Gastrocnemius medialis (tissue), 4 donors: ENCODE measurements at regions of chr17 and their contacts with region 1.

Region 1: DNA sequence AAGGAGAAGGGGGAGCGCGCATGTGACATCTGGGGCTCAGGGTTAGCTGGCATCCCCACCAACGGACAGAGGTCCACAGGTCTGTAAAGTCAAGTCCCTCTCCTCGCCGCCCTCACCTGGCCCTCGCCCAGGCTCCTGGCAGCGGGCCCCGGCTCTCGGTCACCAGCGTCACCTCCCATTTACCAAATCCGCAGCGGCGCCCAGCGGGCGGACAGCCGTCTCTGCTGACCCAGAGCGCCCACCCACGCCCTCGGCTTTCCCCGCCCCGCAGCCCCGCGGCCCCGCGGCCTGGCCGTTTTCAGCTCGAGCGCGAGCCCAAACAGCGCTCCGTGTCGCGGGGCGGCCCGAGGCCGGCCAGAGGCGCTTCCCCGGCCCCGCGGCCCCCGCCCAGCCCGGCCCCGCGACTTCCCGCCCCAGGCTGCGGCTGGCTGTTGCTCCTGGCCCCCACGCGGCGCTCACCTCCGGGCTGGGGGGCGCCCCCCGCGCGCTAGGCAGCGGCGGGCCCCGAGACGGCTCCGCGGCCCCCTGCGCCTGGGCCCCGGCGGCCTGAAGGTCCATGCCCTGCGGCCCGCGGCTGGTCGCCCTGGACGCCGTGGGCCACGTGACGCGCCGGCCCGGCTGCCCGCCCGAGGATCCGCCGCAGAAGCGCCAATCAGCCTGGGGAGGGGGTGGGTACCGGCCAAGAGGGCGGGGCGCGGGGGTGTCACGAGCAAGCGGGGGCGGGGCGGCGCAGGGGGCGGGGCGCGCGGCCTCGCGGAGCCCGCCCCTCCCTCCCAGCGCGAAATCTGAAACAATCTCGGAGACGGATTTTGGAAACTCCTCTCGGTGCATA is at the start of gene COPRS:
- DNase-seq: peak; percentile 85 to 88
- ATAC-seq: peak; percentile 93 to 96
- H3K4me3 ChIP-seq: peak within 1 kb of the TSS; percentile 54 to 82 (median 73)
- H3K27ac ChIP-seq: peak within 1 kb of the TSS; percentile 69 to 83 (median 78)
- H3K4me1 ChIP-seq: peaks cover 7 to 12% of the 10 kb centered on the region in 2 donors
- H3K27me3 ChIP-seq: no peaks in the 10 kb centered on the region
- CTCF ChIP-seq: no peak
- POLR2A ChIP-seq: peak; percentile 58 to 70
- total RNA-seq, gene COPRS: 43.8 to 73.9 (median 61.6) TPM

Region 2: DNA sequence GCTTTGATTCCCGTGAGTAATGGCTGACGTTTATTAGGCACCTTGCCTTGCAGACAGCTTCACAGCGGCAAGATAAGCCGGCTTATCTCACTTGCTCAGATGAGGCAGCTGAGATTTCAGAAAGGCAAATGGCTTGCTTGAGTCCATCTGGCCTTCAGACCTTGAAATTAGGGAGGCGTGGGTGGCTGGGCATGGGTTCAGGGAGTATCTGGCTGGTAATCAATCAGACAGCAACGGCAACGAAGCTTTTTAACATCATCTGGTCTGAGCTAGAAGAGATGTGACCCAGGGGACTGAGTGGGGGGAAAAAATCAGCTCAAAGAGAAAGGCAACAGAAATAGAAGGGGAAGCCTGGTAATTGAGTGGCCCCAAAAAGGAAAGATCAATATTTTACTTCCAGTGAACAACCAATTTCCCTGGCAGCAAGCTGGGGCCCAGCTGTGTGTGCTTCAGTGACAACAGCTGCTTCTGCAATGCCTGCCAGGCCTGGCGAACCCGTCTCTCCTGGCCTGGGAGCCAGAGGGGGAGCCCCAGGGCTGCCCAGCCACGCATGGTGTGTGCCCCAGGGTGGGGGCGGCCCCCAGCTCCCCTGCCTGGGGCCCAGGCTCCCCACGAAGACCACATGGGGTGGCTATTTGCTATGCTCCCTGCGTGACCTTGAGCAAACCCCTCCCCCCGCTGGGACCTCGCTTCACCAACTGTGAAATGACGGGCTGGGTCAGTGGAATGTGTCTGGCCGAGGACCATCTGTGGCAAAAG is 433.4 kb before region 1 on chr17:
- in situ Hi-C with region 1: loop called in 1 of 4 experiments (anchors 25 kb)
- intact Hi-C with region 1: no loop called
- DNase-seq: no peak
- ATAC-seq: no peak
- H3K4me3 ChIP-seq: no peak overlapping the region
- H3K27ac ChIP-seq: no peak overlapping the region
- H3K4me1 ChIP-seq: no peaks in the 10 kb centered on the region
- H3K27me3 ChIP-seq: peaks cover 0 to 4% (median 0%) of the 10 kb centered on the region in 3 donors
- CTCF ChIP-seq: no peak
- POLR2A ChIP-seq: no peak

Region 3: DNA sequence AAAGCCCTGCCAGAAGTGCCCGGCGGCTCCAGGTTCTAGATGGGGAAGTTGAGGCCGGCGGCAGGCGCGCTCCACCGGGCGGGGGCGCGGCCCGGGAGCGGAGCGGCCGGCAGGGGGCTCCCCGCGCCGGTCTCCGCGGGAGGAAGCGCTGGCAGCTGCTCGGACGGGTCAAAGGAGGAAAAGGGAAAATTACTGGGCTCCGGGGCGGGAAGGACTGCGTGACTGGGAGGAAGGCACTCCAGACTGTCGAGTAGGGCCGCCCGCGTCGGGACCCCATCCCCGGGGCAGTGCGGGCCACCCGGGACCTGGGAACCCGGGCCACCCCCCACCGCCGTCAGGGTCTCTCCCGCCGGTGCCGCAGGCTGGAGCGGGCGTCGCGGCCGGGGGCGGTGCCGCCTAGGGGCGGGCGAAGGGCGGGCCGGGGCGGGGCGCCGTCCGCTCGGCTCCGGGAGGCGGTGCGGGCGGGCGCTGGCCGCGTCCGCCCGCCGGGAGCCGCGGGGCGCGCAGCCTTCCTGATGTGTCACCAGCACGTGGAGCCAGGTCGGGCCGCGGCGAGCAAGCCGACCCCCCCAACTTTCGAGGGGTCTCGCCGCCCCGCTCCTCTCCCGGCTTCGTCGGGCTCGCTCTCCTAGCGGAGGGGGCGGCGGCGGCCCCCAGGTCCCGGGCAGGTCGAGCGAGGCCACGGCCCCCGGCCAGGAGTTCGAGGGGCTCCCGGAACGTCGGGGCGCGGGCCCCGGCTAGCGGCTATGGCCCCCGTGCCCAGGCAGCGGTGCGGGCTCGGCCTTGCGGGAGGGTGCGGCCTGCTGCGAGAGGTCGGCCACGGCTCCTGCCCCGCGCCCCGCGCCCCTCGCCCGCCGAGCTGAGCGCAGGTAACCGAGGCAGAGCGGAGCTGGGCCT is 299.9 kb before region 1 on chr17:
- in situ Hi-C with region 1: no loop called
- intact Hi-C with region 1: loop called (anchors 5 kb)
- DNase-seq: peak; percentile 59 to 70
- ATAC-seq: peak; percentile 93
- H3K4me3 ChIP-seq: peak overlapping the region; percentile 56 to 76 (median 68)
- H3K27ac ChIP-seq: peak overlapping the region; percentile 55 to 86 (median 78)
- H3K4me1 ChIP-seq: peaks cover 0 to 6% of the 10 kb centered on the region in 2 donors
- H3K27me3 ChIP-seq: peaks cover 0 to 6% (median 0%) of the 10 kb centered on the region in 3 donors
- CTCF ChIP-seq: peak; percentile 72 to 99 (median 94)
- POLR2A ChIP-seq: peak; percentile 48 to 60

Region 4: GRCh38 chr17:31811101-31811500 is 47.8 kb before region 1 on chr17:
- in situ Hi-C with region 1: no loop called
- intact Hi-C with region 1: no loop called
- DNase-seq: no peak
- ATAC-seq: no peak
- H3K4me3 ChIP-seq: no peak overlapping the region
- H3K27ac ChIP-seq: no peak overlapping the region
- H3K4me1 ChIP-seq: no peaks in the 10 kb centered on the region
- H3K27me3 ChIP-seq: no peaks in the 10 kb centered on the region
- CTCF ChIP-seq: no peak
- POLR2A ChIP-seq: no peak

Region 5: DNA sequence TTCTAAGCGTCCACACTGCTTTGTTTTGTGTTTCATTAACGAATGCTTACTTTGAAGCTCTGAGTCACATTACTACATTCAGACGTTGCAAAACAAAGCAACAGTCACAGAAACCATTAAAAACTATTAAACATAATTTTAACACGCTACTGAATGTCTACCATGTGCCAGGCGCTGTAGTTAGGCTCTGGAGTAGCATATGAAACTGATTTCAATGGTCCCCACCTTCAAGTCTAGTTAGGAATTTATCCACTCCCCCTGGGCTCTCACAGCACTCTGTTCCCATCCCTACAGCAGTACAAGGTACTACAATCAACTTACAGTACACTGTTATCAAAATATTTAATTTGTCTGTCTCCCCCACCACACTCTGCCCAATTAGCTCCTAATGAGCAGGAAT is 42.0 kb after region 1 on chr17:
- in situ Hi-C with region 1: no loop called
- intact Hi-C with region 1: loop called (anchors 2 kb)
- DNase-seq: no peak
- ATAC-seq: no peak
- H3K4me3 ChIP-seq: peak overlapping the region; percentile 70 to 91 (median 77)
- H3K27ac ChIP-seq: peak overlapping the region; percentile 68 to 87 (median 82)
- H3K4me1 ChIP-seq: peaks cover 11 to 16% of the 10 kb centered on the region in 2 donors
- H3K27me3 ChIP-seq: no peaks in the 10 kb centered on the region
- CTCF ChIP-seq: no peak
- POLR2A ChIP-seq: no peak

Region 6: GRCh38 chr17:31935512-31935911 is 76.7 kb after region 1 on chr17:
- in situ Hi-C with region 1: no loop called
- intact Hi-C with region 1: loop called (anchors 5 kb)
- DNase-seq: no peak
- ATAC-seq: no peak
- H3K4me3 ChIP-seq: no peak overlapping the region
- H3K27ac ChIP-seq: no peak overlapping the region
- H3K4me1 ChIP-seq: peaks cover 11 to 17% of the 10 kb centered on the region in 2 donors
- H3K27me3 ChIP-seq: no peaks in the 10 kb centered on the region
- CTCF ChIP-seq: no peak
- POLR2A ChIP-seq: no peak